MCF 10A (cell line): ENCODE measurements at regions of chr5 and their contacts with region 1.

Region 1: GRCh38 chr5:56350598-56351170 is 117.6 kb upstream of the ANKRD55 start:
- DNase-seq: peak; percentile 98
- H3K4me3 Mint-ChIP-seq: no peak overlapping the region
- H3K27ac Mint-ChIP-seq: peak overlapping the region; percentile 15
- H3K4me1 Mint-ChIP-seq: peaks cover 29% of the 10 kb centered on the region
- H3K27me3 Mint-ChIP-seq: no peaks in the 10 kb centered on the region
- CTCF ChIP-seq: no peak

Region 2: DNA sequence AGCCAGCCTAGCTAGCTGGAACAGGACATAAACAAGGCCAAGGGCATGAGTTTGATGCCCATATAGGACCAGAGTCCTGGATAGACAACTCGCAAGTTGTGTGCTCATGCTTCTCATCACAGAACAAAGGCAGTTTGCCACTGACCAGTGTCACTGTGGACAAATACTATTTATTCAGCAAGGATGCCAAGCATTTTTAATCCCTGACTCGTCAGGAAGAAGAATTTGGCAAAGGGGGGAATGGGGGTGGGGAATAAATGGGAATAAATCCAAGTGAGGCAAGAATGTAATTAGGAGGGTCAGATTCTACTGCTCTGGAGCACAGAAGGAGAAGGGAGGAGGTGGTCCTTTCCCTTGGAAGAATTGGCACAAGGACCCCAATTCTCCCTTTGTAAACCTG is 70.7 kb before region 1 on chr5:
- CTCF ChIA-PET with region 1: no interaction called
- POLR2A ChIA-PET with region 1: no interaction called
- intact Hi-C with region 1: no loop called
- DNase-seq: peak; percentile 69
- H3K4me3 Mint-ChIP-seq: no peak overlapping the region
- H3K27ac Mint-ChIP-seq: no peak overlapping the region
- H3K4me1 Mint-ChIP-seq: no peaks in the 10 kb centered on the region
- H3K27me3 Mint-ChIP-seq: no peaks in the 10 kb centered on the region
- CTCF ChIP-seq: no peak

Region 3: DNA sequence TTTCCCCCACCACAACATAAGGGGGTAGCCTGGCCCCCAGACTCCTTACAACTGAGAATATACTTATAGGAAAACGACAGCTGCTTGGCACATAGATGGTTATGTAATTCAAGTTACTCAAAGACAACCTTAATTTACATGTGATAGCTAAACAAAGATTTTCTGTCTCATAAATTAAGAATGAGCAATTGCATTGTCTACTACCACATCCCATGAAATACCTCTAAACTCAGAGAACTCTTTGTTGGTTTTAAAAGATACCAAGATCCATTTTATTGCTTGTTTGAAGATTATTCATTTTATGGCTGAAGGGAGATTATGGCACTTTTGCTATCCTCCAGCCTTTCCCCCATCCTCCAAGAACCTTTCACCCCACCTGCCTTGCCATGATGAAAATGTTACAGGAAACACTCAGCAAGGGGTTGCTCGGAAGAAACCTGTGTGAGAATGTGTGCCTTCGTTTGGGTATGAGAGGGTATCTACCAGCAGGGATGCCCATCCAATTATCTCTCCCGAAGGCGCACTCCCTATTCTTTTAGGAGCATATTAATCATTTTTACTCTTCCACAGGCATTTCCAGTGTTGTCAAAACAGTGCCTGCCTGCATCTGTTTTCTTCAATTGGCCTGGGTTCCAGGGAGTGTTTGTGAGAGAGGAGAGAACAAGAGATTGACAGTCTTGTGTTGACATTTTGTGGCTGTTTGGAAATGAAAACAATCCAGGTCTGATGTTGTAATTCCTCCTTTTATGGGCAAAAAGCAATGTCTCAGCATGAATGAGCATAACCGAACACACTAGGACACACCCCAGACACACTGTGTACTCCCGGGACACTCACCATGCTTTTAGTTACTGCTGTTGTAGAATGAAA is 90.4 kb after region 1 on chr5:
- CTCF ChIA-PET with region 1: no interaction called
- POLR2A ChIA-PET with region 1: no interaction called
- intact Hi-C with region 1: loop called (anchors 1 kb)
- DNase-seq: peak; percentile 95
- H3K4me3 Mint-ChIP-seq: peak overlapping the region; percentile 63
- H3K27ac Mint-ChIP-seq: peak overlapping the region; percentile 99
- H3K4me1 Mint-ChIP-seq: peaks cover 11% of the 10 kb centered on the region
- H3K27me3 Mint-ChIP-seq: no peaks in the 10 kb centered on the region
- CTCF ChIP-seq: no peak